ENCODE measurements at regions of chr19 and their contacts with region 1.

Region 1: DNA sequence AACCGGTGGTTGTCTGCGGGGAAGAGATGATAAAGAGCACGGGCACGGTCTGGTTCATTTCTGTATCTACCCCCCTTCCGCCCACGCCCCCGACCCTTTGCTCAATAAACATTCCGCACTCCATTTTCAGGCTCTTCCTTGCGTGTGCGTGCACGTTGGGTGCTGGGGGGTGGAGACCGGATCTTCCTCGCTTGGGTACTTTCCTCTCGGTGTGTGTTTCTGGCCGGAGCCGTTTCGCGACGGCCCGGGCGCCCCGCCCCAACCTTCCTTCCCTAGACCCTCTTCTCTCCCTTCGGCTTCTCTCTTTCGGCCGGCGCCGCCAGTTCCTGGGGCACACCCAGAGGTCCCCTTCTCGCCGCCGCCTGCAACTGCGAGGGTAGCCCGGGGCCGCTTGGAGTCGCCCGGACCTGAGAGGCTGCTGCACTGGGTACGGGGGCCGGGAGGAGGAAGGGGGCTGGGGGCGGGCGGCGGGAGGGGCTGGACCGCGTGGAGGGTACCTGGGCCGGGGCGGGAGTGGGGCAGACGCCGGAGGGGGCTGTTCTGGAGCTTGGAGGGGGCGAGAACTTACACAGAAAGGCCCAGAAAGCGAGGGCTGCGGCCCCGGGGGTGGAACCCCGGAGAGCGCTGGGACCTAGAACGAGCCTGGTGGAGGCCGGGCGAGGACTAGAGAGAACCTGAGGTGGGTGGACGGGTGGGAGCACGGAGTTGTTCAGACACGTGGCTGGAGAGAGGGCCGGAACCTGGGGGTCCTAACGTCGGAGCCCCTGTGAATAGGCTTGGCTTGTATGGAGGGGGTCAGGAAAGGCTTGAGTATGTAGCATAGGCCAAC is at the start of gene ZNF581:
- DNase-seq: peak; percentile 63 to 92 (median 74)
- ATAC-seq: peak; percentile 54
- H3K4me3 ChIP-seq: peak within 1 kb of the TSS; percentile 78
- H3K4me3 Mint-ChIP-seq: peak within 1 kb of the TSS; percentile 89
- H3K27ac ChIP-seq: peak within 1 kb of the TSS; percentile 71 to 78
- H3K27ac Mint-ChIP-seq: peak within 1 kb of the TSS; percentile 88
- H3K4me1 ChIP-seq: peaks cover 77% of the 10 kb centered on the region
- H3K4me1 Mint-ChIP-seq: peaks cover 54% of the 10 kb centered on the region
- H3K27me3 ChIP-seq: no peaks in the 10 kb centered on the region
- H3K27me3 Mint-ChIP-seq: no peaks in the 10 kb centered on the region
- CTCF ChIP-seq: no peak
- total RNA-seq, gene ZNF581: 23.1 to 24.7 TPM

Region 2: DNA sequence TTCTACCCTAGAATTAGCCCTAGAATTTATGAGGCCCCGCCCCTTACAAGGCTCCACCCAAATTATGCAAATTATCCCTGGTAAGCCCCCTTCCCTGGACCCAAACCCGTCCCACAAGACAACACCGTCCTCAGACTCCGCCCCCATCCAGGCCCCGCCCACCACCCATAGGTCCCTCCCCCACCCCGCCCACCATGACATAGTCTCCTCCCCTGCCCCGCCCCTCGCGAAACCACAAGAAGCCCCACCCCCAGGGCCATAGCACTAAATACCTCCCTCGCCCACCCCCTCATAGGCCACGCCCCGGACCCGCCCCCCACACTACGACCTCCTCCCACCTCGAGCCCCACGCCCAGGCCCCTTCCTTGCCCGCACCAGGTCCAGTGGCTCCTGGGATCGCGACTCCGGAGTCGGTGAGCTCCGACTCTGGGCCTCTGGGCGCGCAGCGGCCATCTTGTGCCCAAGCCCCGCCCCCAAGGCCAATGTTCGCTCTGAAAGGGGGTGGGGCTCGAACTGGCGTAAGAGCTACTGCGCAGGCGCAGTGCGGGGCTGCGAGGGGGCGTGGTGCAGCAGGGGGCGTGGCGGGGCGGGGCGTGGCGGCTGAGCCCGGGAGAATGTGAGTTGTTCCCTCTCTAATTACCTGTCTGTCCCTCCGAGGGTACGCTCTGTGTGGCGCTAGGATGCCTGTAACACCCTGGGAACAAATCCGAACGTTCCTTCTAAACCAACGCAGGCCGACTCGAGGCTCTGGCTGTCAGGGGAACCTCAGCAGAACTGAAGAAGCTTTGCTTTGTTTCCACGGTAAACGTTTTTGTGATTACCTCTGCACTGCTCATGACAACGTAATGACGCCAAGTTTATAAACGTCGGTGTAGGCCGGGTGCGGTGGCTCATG is 19.2 kb before region 1 on chr19 and contains the start of gene ZNF784:
- CTCF ChIA-PET with region 1: interaction called, 20 read pairs
- POLR2A ChIA-PET with region 1: interaction called, 24 read pairs
- intact Hi-C with region 1: no loop called
- DNase-seq: peak; percentile 88 to 98 (median 93)
- ATAC-seq: peak; percentile 69
- H3K4me3 ChIP-seq: peak within 1 kb of the TSS; percentile 68
- H3K4me3 Mint-ChIP-seq: peak within 1 kb of the TSS; percentile 98
- H3K27ac ChIP-seq: peak within 1 kb of the TSS; percentile 89 to 94
- H3K27ac Mint-ChIP-seq: peak within 1 kb of the TSS; percentile 100
- H3K4me1 ChIP-seq: peaks cover 56% of the 10 kb centered on the region
- H3K4me1 Mint-ChIP-seq: peaks cover 55% of the 10 kb centered on the region
- H3K27me3 ChIP-seq: no peaks in the 10 kb centered on the region
- H3K27me3 Mint-ChIP-seq: no peaks in the 10 kb centered on the region
- CTCF ChIP-seq: no peak
- total RNA-seq, gene ZNF784: 11.2 to 11.8 TPM

Region 3: GRCh38 chr19:55674841-55675660 is 31.5 kb after region 1 on chr19 and contains the start of gene EPN1:
- CTCF ChIA-PET with region 1: no interaction called
- POLR2A ChIA-PET with region 1: no interaction called
- intact Hi-C with region 1: loop called in 1 of 2 experiments (anchors 5 kb)
- DNase-seq: peak; percentile 95 to 99 (median 97)
- ATAC-seq: peak; percentile 92
- H3K4me3 ChIP-seq: peak within 1 kb of the TSS; percentile 73
- H3K4me3 Mint-ChIP-seq: peak within 1 kb of the TSS; percentile 95
- H3K27ac ChIP-seq: peak within 1 kb of the TSS; percentile 69 to 89
- H3K27ac Mint-ChIP-seq: peak within 1 kb of the TSS; percentile 90
- H3K4me1 ChIP-seq: peaks cover 59% of the 10 kb centered on the region
- H3K4me1 Mint-ChIP-seq: peaks cover 50% of the 10 kb centered on the region
- H3K27me3 ChIP-seq: no peaks in the 10 kb centered on the region
- H3K27me3 Mint-ChIP-seq: no peaks in the 10 kb centered on the region
- CTCF ChIP-seq: no peak
- total RNA-seq, gene EPN1: 39.0 to 40.5 TPM

Measured in CD4-positive, alpha-beta T cell (primary cell).